Activated B cell treated with CpG ODN at 0.5 μM for 24 hours (primary cell): ENCODE measurements at regions of chr22 and their contacts with region 1.

Region 1: GRCh38 chr22:31749636-31750364 is at the start of gene PRR14L:
- DNase-seq: peak; percentile 100
- ATAC-seq: peak; percentile 73
- H3K4me3 Mint-ChIP-seq: peak within 1 kb of the TSS; percentile 92
- H3K27ac Mint-ChIP-seq: peak within 1 kb of the TSS; percentile 96
- H3K4me1 Mint-ChIP-seq: peaks cover 52% of the 10 kb centered on the region
- H3K27me3 Mint-ChIP-seq: no peaks in the 10 kb centered on the region
- CTCF ChIP-seq: no peak
- total RNA-seq, gene PRR14L: 49.7 and 59.5 TPM in 2 replicates

Region 2: DNA sequence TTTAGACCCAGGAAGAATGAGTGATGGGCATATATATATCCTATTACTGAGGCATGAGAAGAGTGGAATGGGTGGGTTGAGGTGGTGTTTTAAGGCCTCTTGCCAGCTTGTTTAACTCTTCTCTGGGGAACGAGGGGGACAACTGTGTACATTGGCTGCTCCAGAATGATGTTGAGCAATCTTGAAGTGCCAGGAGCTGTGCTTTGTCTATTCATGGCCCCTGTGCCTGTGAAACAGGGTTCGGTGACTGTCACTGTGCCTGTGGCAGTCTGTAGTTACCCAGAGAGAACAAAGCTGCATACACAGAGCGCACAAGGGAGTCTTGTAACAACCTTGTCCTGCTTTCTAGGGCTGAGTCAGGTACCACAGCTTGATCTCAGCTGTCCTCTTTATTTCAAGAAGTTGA is 526.0 kb before region 1 on chr22:
- CTCF ChIA-PET with region 1: no interaction called
- POLR2A ChIA-PET with region 1: no interaction called
- intact Hi-C with region 1: no loop called
- DNase-seq: no peak
- ATAC-seq: no peak
- H3K4me3 Mint-ChIP-seq: no peak overlapping the region
- H3K27ac Mint-ChIP-seq: no peak overlapping the region
- H3K4me1 Mint-ChIP-seq: peaks cover 32% of the 10 kb centered on the region
- H3K27me3 Mint-ChIP-seq: no peaks in the 10 kb centered on the region
- CTCF ChIP-seq: no peak

Region 3: DNA sequence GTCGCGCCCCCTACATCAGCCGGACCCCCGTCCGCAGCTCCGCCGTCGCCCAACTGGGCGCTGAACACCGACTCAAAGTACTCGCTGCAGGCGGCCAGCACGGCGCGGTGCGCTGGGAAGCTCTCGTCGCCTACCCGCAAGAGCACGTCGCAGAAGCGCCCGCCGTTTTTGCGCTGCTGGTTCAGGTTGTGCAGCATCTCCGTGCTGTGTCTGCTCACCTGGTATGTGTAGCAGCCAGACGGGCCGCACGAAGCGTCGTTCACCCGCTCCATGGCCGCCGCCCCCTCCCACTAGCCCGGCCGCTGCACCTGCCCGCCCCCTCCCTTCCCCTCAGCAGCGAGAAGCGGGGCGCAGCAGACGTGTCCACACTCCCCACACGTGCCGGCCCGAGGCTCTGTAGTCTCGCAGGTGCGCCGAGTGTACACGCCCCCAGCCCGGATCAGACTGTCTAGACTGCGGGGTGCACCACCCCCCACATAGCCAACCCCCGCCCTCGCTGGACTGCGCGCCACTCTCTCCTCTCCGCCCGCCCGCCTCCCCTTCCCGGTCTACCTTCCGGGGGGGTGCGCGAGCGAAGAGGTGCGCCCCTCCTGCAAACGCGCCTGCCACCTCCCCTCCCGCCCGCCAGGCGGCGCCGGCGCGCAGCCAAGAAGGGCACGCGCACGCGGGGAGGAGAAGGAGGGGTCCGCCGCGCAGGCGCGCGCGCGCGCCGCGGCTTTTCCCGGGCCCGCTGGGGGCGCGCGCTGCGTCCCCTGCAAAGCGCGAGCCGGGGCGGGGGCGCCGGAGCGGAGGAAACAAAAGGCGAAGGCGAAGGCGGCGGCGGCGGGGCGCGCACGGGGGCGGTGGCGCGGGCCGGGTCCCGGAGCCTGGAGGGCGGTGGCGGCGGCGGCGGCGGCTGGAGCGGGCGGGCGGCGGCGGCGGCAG is 404.2 kb before region 1 on chr22:
- CTCF ChIA-PET with region 1: no interaction called
- POLR2A ChIA-PET with region 1: interaction called, 5 read pairs
- intact Hi-C with region 1: loop called (anchors 1 kb)
- DNase-seq: peak; percentile 89
- ATAC-seq: peak; percentile 58
- H3K4me3 Mint-ChIP-seq: peak overlapping the region; percentile 83
- H3K27ac Mint-ChIP-seq: peak overlapping the region; percentile 80
- H3K4me1 Mint-ChIP-seq: peaks cover 50% of the 10 kb centered on the region
- H3K27me3 Mint-ChIP-seq: no peaks in the 10 kb centered on the region
- CTCF ChIP-seq: peak; percentile 56

Region 4: GRCh38 chr22:31489604-31490495 is 259.9 kb before region 1 on chr22 and contains the start of gene EIF4ENIF1:
- CTCF ChIA-PET with region 1: no interaction called
- POLR2A ChIA-PET with region 1: interaction called, 3 read pairs
- intact Hi-C with region 1: loop called (anchors 1 kb)
- DNase-seq: peak; percentile 82
- ATAC-seq: peak; percentile 66
- H3K4me3 Mint-ChIP-seq: peak within 1 kb of the TSS; percentile 93
- H3K27ac Mint-ChIP-seq: peak within 1 kb of the TSS; percentile 100
- H3K4me1 Mint-ChIP-seq: peaks cover 54% of the 10 kb centered on the region
- H3K27me3 Mint-ChIP-seq: no peaks in the 10 kb centered on the region
- CTCF ChIP-seq: no peak
- total RNA-seq, gene EIF4ENIF1: 46.4 and 53.6 TPM in 2 replicates

Region 5: GRCh38 chr22:31661851-31662656 is 87.7 kb before region 1 on chr22 and contains the start of gene PISD:
- CTCF ChIA-PET with region 1: interaction called, 5 read pairs
- POLR2A ChIA-PET with region 1: interaction called, 10 read pairs
- intact Hi-C with region 1: loop called (anchors 1 kb)
- DNase-seq: peak; percentile 96
- ATAC-seq: peak; percentile 96
- H3K4me3 Mint-ChIP-seq: peak within 1 kb of the TSS; percentile 96
- H3K27ac Mint-ChIP-seq: peak within 1 kb of the TSS; percentile 91
- H3K4me1 Mint-ChIP-seq: peaks cover 32% of the 10 kb centered on the region
- H3K27me3 Mint-ChIP-seq: no peaks in the 10 kb centered on the region
- CTCF ChIP-seq: no peak
- total RNA-seq, gene PISD: 53.7 and 61.6 TPM in 2 replicates

Region 6: DNA sequence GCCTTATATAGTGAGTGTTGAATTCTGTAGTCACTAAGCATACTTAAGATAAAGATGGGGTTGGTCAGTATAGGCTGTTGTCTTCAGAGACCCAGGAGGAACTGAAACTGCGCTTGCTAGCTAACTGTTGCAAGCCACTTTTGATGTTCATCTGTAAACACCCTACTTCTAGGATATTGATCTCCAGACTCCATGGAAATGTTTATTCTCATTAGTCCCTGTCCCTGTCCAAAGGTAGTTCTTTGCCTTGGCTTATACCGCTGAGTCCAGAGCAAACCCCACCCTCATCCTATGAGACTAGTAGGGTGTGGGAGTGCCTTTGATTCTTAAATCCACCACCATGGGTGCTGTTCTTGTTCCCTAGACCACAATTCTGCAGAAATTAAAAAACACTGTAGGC is 40.4 kb after region 1 on chr22:
- CTCF ChIA-PET with region 1: no interaction called
- POLR2A ChIA-PET with region 1: interaction called, 16 read pairs
- intact Hi-C with region 1: loop called (anchors 2 kb)
- DNase-seq: no peak
- ATAC-seq: peak; percentile 82
- H3K4me3 Mint-ChIP-seq: peak overlapping the region; percentile 25
- H3K27ac Mint-ChIP-seq: peak overlapping the region; percentile 82
- H3K4me1 Mint-ChIP-seq: peaks cover 36% of the 10 kb centered on the region
- H3K27me3 Mint-ChIP-seq: no peaks in the 10 kb centered on the region
- CTCF ChIP-seq: no peak

Region 7: GRCh38 chr22:32325416-32325801 is 575.6 kb after region 1 on chr22:
- CTCF ChIA-PET with region 1: no interaction called
- POLR2A ChIA-PET with region 1: no interaction called
- intact Hi-C with region 1: no loop called
- DNase-seq: no peak
- ATAC-seq: no peak
- H3K4me3 Mint-ChIP-seq: no peak overlapping the region
- H3K27ac Mint-ChIP-seq: no peak overlapping the region
- H3K4me1 Mint-ChIP-seq: no peaks in the 10 kb centered on the region
- H3K27me3 Mint-ChIP-seq: peaks cover 4% of the 10 kb centered on the region
- CTCF ChIP-seq: no peak

Region 8: DNA sequence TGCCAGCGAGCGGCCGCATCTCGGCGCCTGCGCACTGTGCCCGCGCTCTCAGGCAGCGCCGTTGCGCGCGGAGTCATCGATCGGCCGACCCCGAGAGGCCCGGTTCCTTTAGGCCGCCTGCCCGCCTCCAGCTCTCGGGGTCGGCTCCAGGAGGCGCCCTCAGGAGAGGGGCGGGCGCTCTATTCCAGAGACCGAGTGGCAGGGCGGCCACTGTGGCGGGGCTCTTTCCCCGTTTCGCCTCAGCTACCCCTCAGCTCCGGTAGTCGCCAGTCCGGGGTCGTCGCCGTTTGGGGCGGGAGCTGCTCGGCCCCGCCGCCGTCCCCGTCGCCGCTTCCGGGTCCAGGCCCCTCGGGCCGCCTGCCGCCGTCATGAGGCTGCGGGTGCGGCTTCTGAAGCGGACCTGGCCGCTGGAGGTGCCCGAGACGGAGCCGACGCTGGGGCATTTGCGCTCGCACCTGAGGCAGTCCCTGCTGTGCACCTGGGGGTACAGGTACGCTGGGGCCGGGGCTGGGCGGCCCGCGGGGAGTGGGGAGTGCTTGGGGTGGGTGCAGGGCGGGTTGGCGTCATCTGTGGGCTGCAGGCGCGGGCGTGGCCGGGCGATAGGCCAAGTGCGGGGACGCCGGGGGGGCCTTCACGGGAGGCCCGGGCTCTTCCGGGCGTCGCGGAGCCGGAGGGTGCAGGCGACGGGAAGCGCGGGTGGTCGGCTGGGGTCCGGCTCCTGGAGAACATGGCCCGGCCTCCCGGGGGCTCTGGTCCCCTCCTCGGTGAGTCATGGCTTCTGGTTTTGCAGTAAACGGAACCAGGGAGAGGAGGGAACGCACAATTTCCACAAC is 725.1 kb after region 1 on chr22 and contains the start of gene FBXO7:
- CTCF ChIA-PET with region 1: no interaction called
- POLR2A ChIA-PET with region 1: interaction called, 4 read pairs
- intact Hi-C with region 1: loop called (anchors 1 kb)
- DNase-seq: peak; percentile 92
- ATAC-seq: peak; percentile 84
- H3K4me3 Mint-ChIP-seq: peak within 1 kb of the TSS; percentile 95
- H3K27ac Mint-ChIP-seq: peak within 1 kb of the TSS; percentile 91
- H3K4me1 Mint-ChIP-seq: peaks cover 30% of the 10 kb centered on the region
- H3K27me3 Mint-ChIP-seq: no peaks in the 10 kb centered on the region
- CTCF ChIP-seq: no peak
- total RNA-seq, gene FBXO7: 85.4 and 97.2 TPM in 2 replicates